ENCODE measurements at regions of chr6 and their contacts with region 1.

Region 1: DNA sequence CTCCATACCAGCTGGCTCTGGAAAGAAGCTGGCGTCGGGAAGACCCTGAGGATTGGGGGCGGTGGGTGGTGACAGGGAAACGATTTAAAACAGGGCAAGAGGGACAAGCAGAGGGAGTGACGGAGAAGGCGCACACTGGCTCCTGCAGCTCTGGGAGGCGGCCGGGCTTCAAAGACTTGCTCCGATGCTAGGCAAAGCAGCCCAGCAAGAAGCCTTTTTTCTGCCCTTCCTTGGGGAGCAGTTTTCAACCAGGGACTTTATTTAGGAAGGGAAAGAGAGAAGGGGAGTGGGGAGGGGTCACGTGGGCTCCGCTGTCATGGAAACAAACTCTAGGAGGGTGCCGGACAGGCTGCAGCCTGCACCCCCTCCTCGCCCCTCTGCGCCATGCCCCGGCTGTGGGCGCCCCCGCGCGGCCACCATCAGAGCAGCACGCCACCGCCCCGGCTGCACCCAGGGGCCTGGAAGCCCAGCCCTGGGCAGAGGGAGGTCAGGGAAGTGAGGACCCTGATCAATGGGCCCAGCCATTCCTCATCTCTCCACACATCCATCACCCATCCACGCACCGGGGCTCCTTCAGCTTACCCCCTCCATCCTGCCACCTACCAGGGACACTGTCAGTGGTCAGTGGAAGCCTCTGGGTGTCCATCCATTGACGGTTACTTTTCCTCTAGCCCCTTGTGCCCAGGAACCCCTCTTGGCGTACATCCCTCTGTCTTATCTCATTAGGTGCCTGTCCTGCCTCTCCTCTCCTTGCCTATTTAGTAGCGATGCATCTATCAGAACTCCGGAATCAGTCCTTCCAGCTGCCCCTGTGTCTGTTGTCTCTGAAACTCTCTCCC is 66.6 kb upstream of the CCDC167 start:
- DNase-seq: peak in 4 of 6 donors; percentile 13 to 86 (median 42)
- ATAC-seq: peak; percentile 71 to 96 (median 92)
- H3K4me3 ChIP-seq: peak overlapping the region in 1 of 4 donors; percentile 8
- H3K27ac ChIP-seq: no peak overlapping the region
- H3K4me1 ChIP-seq: no peaks in the 10 kb centered on the region
- H3K27me3 ChIP-seq: no peaks in the 10 kb centered on the region
- CTCF ChIP-seq: peak; percentile 45 to 72 (median 70)

Region 2: DNA sequence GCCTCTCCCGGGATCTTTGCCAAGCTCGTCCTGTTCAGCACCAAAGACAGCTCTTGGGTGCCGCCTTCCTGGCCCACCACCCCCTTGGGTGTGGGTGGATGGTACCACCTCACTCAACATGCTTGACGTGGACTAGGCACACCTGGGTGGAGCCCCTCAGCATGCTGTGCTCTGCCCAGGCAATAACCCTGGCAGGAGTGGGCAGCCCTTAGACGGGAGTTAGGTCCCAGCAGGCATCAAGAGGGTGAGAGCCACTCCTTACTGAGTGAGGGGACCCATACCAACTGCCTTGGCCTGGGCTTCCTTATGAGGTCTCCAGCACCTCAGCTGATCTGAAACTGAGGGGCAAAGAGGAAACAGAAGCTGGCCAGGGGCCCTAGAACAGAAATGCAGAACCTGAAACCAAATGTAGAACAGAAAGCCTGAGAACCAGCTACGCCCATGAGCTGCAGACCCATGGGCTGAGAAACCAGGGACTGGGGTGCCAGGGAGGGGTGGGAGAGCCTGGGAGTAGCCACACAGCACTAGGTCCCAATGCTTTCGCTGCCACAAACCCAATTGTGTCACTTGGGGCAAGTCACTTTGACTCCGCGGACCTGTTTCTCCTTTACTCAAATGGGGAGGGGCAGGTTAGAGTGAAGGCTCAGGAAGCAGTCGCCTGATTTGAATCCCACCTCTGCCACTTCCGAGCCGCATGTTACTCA is 558.8 kb before region 1 on chr6:
- intact Hi-C with region 1: no loop called
- DNase-seq: no peak
- ATAC-seq: peak in 3 of 4 donors; percentile 23 to 57 (median 26)
- H3K4me3 ChIP-seq: peak overlapping the region in 1 of 4 donors; percentile 2
- H3K27ac ChIP-seq: no peak overlapping the region
- H3K4me1 ChIP-seq: no peaks in the 10 kb centered on the region
- H3K27me3 ChIP-seq: no peaks in the 10 kb centered on the region
- CTCF ChIP-seq: no peak

Region 3: GRCh38 chr6:37483917-37484785 is 82.2 kb before region 1 on chr6:
- intact Hi-C with region 1: loop called in 1 of 3 experiments (anchors 5 kb)
- DNase-seq: peak in 4 of 6 donors; percentile 52 to 84 (median 70)
- ATAC-seq: peak; percentile 60 to 88 (median 84)
- H3K4me3 ChIP-seq: no peak overlapping the region
- H3K27ac ChIP-seq: no peak overlapping the region
- H3K4me1 ChIP-seq: no peaks in the 10 kb centered on the region
- H3K27me3 ChIP-seq: no peaks in the 10 kb centered on the region
- CTCF ChIP-seq: peak; percentile 24 to 65 (median 56)

Region 4: GRCh38 chr6:37889051-37889450 is 322.7 kb after region 1 on chr6:
- intact Hi-C with region 1: no loop called
- DNase-seq: no peak
- ATAC-seq: peak in 3 of 4 donors; percentile 17 to 41 (median 26)
- H3K4me3 ChIP-seq: no peak overlapping the region
- H3K27ac ChIP-seq: no peak overlapping the region
- H3K4me1 ChIP-seq: peaks cover 0 to 8% (median 6%) of the 10 kb centered on the region in 3 donors
- H3K27me3 ChIP-seq: no peaks in the 10 kb centered on the region
- CTCF ChIP-seq: no peak